Motor neuron (in vitro differentiated cells): ENCODE measurements at regions of chr4 and their contacts with region 1.

Region 1: DNA sequence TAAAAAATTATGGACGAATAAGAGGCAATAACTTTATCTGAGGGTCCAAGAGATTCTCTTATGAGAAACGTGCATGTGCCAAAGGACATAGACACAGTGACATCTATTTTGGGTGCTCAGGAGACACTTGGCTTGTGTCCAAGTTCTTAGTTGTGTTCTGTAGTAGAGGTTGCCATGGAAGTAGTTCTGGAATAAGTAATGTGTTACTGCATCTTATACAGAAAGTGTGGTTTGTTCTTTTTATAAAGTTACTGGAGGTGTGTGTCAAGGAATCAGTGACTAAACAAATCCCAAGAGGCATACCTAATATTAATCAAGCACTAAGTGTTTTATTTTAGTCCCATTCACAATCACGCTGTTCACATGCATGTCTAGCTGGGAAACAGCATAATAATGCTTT is 305.7 kb downstream of the ARHGAP24 start:
- ATAC-seq: peak in 1 of 8 experiments; percentile 49
- H3K4me3 ChIP-seq: no peak overlapping the region
- H3K27ac ChIP-seq: no peak overlapping the region
- H3K4me1 ChIP-seq: no peaks in the 10 kb centered on the region

Region 2: DNA sequence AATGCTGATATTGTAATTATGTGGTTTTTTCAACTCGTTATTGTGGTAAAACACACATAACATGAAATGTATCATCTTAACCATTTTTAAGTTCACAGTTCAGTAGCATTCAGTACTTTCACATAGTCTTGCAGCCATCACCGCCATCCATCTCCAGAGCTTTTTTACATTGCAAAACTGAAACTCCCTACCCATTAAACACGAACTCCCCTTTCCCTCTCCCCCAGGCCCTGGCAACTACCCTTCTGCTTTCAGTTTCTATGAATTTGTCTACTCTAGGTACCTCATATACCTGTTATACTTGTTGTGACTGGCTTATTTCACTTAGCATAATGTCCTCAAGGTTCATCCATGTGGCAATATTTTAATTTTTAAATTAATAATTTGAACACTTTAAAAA is 198.6 kb after region 1 on chr4:
- in situ Hi-C with region 1: loop called in 1 of 9 experiments (anchors 10 kb)
- ATAC-seq: no peak
- H3K4me3 ChIP-seq: no peak overlapping the region
- H3K27ac ChIP-seq: no peak overlapping the region
- H3K4me1 ChIP-seq: no peaks in the 10 kb centered on the region